H1 (cell line): ENCODE measurements at regions of chr5 and their contacts with region 1.

Region 1: DNA sequence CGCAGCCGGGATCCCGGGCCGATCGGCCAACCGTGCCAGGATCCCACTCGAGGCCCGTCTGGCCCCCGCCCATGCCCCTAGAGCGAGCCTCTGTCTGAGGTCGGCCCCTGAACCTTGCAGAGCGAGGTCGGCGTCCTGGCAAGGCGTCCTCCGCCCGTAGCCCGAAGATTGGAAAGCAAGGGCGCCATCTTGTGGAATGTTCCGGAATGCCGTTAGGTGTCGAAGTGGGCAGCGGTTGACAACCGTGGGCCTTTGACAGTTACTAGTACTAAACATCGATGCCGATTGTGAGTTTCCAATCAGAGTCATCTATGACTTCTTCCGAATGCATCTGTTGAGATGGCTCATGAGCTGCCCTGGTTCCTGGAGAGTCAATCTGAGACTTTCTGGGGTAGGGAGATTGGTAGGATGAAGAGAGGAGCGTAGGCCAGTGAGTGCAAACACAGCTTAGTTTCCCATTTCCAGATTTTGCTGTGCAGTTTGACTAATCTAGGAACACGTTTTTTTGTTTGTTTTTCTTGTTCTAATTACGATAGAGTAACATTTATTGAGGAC is 923 bp upstream of the PLK2 start:
- DNase-seq: peak; percentile 84 to 96
- H3K4me3 ChIP-seq: peak overlapping the region; percentile 61 to 79 (median 73)
- H3K27ac ChIP-seq: no peak overlapping the region
- H3K4me1 ChIP-seq: peaks cover 0 to 4% (median 3%) of the 10 kb centered on the region in 4 experiments; a peak in 3 of 7 replicates
- H3K27me3 ChIP-seq: peaks cover 0 to 3% (median 2%) of the 10 kb centered on the region in 4 experiments; a peak in 3 of 7 replicates
- CTCF ChIP-seq: peak; percentile 82 to 88 (median 87)
- EP300 ChIP-seq: peak in 1 of 2 experiments; percentile 3; a peak in 1 of 3 replicates
- POLR2A ChIP-seq: no peak
- RAD21 ChIP-seq: peak; percentile 94 to 98

Region 2: GRCh38 chr5:57779383-57780223 is 681.2 kb before region 1 on chr5:
- CTCF ChIA-PET with region 1: interaction called, 86 read pairs
- POLR2A ChIA-PET with region 1: interaction called, 3 read pairs
- DNase-seq: peak in 1 of 2 experiments; percentile 49
- H3K4me3 ChIP-seq: no peak overlapping the region
- H3K27ac ChIP-seq: no peak overlapping the region
- H3K4me1 ChIP-seq: no peaks in the 10 kb centered on the region
- H3K27me3 ChIP-seq: no peaks in the 10 kb centered on the region
- CTCF ChIP-seq: peak in 2 of 3 experiments; percentile 55 to 58; a peak in 3 of 4 replicates
- EP300 ChIP-seq: no peak
- POLR2A ChIP-seq: no peak
- RAD21 ChIP-seq: peak; percentile 90 to 94

Region 3: GRCh38 chr5:57887851-57888621 is 572.8 kb before region 1 on chr5:
- CTCF ChIA-PET with region 1: interaction called, 13 read pairs
- POLR2A ChIA-PET with region 1: no interaction called
- DNase-seq: no peak
- H3K4me3 ChIP-seq: no peak overlapping the region
- H3K27ac ChIP-seq: no peak overlapping the region
- H3K4me1 ChIP-seq: peaks cover 0 to 13% (median 4%) of the 10 kb centered on the region in 4 experiments
- H3K27me3 ChIP-seq: no peaks in the 10 kb centered on the region
- CTCF ChIP-seq: peak; percentile 42 to 60 (median 59)
- EP300 ChIP-seq: no peak
- POLR2A ChIP-seq: no peak
- RAD21 ChIP-seq: peak; percentile 84 to 89

Region 4: GRCh38 chr5:58133631-58134296 is 327.0 kb before region 1 on chr5:
- CTCF ChIA-PET with region 1: interaction called, 10 read pairs
- POLR2A ChIA-PET with region 1: no interaction called
- DNase-seq: no peak
- H3K4me3 ChIP-seq: no peak overlapping the region
- H3K27ac ChIP-seq: no peak overlapping the region
- H3K4me1 ChIP-seq: no peaks in the 10 kb centered on the region
- H3K27me3 ChIP-seq: no peaks in the 10 kb centered on the region
- CTCF ChIP-seq: no peak
- EP300 ChIP-seq: no peak
- POLR2A ChIP-seq: no peak
- RAD21 ChIP-seq: no peak